CD8-positive, alpha-beta T cell (primary cell): ENCODE measurements at regions of chrX and their contacts with region 1.

Region 1: DNA sequence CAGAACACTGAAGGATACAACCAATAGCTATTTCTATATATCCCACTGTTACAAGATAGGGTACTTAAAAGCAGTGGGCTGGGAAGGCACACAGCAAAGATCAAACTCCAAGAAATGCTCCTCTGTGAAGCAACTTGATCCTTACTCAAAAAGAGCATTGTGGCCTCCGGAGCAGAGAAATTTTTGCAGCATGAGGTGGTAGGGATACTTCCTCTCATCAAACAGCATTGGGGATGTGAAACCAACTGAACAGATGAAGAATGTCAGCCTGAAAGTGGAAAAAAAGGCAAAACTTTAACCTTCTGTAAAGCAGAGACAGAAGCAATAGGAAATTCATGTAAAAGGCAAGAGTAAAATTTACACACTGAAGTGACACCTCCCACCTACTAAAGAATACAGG is 92.2 kb downstream of the HUWE1 start:
- DNase-seq: no peak
- ATAC-seq: no peak
- H3K4me3 ChIP-seq: no peak overlapping the region
- H3K4me3 Mint-ChIP-seq: no peak overlapping the region
- H3K27ac ChIP-seq: no peak overlapping the region
- H3K27ac Mint-ChIP-seq: no peak overlapping the region
- H3K4me1 ChIP-seq: no peaks in the 10 kb centered on the region
- H3K4me1 Mint-ChIP-seq: peaks cover 3% of the 10 kb centered on the region
- H3K27me3 ChIP-seq: no peaks in the 10 kb centered on the region
- H3K27me3 Mint-ChIP-seq: no peaks in the 10 kb centered on the region
- CTCF ChIP-seq: no peak

Region 2: GRCh38 chrX:53422086-53422860 is 172.1 kb before region 1 on chrX and contains the start of gene SMC1A:
- CTCF ChIA-PET with region 1: no interaction called
- POLR2A ChIA-PET with region 1: no interaction called
- intact Hi-C with region 1: no loop called
- DNase-seq: peak; percentile 86 to 98 (median 96)
- ATAC-seq: peak; percentile 89
- H3K4me3 ChIP-seq: peak within 1 kb of the TSS; percentile 92 to 94
- H3K4me3 Mint-ChIP-seq: peak within 1 kb of the TSS; percentile 94
- H3K27ac ChIP-seq: peak within 1 kb of the TSS; percentile 95 to 99
- H3K27ac Mint-ChIP-seq: peak within 1 kb of the TSS; percentile 95
- H3K4me1 ChIP-seq: peaks cover 18% of the 10 kb centered on the region
- H3K4me1 Mint-ChIP-seq: peaks cover 33% of the 10 kb centered on the region
- H3K27me3 ChIP-seq: no peaks in the 10 kb centered on the region
- H3K27me3 Mint-ChIP-seq: no peaks in the 10 kb centered on the region
- CTCF ChIP-seq: no peak
- total RNA-seq, gene SMC1A: 23.7 to 25.3 TPM

Region 3: DNA sequence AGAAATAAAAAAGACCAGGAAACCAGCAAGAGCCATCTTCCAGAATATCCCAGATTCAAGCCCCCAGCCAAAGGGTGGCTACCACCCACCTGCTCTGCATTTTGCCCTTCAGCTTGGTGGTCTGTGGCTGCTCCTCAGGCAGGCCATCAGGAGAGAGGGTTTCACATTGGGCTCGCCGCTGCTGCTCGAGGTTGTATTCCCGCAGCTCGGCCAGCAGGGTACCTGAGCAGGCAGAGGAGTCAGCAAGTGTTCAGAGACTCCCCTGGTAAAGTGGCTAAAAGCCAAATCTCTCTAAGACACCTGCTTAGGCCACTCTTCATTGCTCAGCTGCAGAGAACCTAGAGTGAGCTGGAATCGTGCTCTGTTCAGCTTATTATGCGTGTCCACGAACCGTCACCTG is 49.4 kb before region 1 on chrX:
- CTCF ChIA-PET with region 1: no interaction called
- POLR2A ChIA-PET with region 1: no interaction called
- intact Hi-C with region 1: loop called (anchors 5 to 10 kb)
- DNase-seq: no peak
- ATAC-seq: no peak
- H3K4me3 ChIP-seq: no peak overlapping the region
- H3K4me3 Mint-ChIP-seq: no peak overlapping the region
- H3K27ac ChIP-seq: no peak overlapping the region
- H3K27ac Mint-ChIP-seq: no peak overlapping the region
- H3K4me1 ChIP-seq: no peaks in the 10 kb centered on the region
- H3K4me1 Mint-ChIP-seq: no peaks in the 10 kb centered on the region
- H3K27me3 ChIP-seq: no peaks in the 10 kb centered on the region
- H3K27me3 Mint-ChIP-seq: no peaks in the 10 kb centered on the region
- CTCF ChIP-seq: no peak

Region 4: GRCh38 chrX:53631156-53631555 is 36.8 kb after region 1 on chrX:
- CTCF ChIA-PET with region 1: no interaction called
- POLR2A ChIA-PET with region 1: no interaction called
- intact Hi-C with region 1: loop called in 1 of 2 experiments (anchors 5 kb)
- DNase-seq: no peak
- ATAC-seq: no peak
- H3K4me3 ChIP-seq: no peak overlapping the region
- H3K4me3 Mint-ChIP-seq: no peak overlapping the region
- H3K27ac ChIP-seq: no peak overlapping the region
- H3K27ac Mint-ChIP-seq: no peak overlapping the region
- H3K4me1 ChIP-seq: no peaks in the 10 kb centered on the region
- H3K4me1 Mint-ChIP-seq: peaks cover 13% of the 10 kb centered on the region
- H3K27me3 ChIP-seq: no peaks in the 10 kb centered on the region
- H3K27me3 Mint-ChIP-seq: no peaks in the 10 kb centered on the region
- CTCF ChIP-seq: no peak